CD4-positive, alpha-beta T cell (primary cell): ENCODE measurements at regions of chr17 and their contacts with region 1.

Region 1: DNA sequence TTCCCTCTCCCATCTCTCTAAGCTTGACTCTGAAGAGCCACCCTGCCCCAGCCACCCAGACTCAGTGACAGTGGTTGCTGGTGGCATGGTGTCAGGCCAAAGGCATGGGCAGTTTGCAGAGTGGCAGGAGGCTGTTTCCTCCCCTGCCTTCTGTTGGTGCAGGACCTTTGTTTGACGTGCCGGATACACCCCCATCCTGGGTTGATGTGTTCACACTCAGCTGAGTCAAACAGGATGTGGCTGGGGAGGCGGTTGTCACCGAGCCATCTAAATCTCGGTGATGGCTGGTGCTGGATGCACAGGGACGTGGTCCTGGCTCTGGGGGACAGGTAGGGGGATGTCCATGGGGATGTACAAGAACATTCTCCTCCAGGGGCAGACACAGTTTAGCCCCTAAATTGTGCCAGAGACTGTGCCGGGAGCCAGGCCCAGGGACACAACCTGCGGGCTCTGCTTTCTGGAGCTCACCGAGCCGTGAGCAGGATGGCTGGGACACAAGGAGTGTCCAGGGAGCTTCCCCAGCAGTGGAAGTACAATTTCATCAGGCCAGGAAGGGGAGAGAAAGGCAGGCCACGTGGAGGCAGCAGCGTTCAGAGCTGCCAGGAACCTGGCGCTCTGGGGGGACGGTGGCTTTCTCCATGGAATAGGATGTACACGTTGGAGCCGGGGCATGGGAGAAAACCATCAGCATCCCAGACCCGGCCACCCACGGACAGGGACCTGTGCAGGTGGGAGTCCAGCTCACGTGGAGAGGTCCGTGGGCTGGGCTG is 264.2 kb downstream of the SEC14L1 start:
- DNase-seq: peak; percentile 66 to 94 (median 81)
- ATAC-seq: peak; percentile 80
- H3K4me3 ChIP-seq: peak overlapping the region; percentile 82
- H3K4me3 Mint-ChIP-seq: peak overlapping the region; percentile 91
- H3K27ac ChIP-seq: peak overlapping the region; percentile 86 to 92
- H3K27ac Mint-ChIP-seq: peak overlapping the region; percentile 96
- H3K4me1 ChIP-seq: peaks cover 99% of the 10 kb centered on the region
- H3K4me1 Mint-ChIP-seq: peaks cover 92% of the 10 kb centered on the region
- H3K27me3 ChIP-seq: no peaks in the 10 kb centered on the region
- H3K27me3 Mint-ChIP-seq: no peaks in the 10 kb centered on the region
- CTCF ChIP-seq: no peak

Region 2: DNA sequence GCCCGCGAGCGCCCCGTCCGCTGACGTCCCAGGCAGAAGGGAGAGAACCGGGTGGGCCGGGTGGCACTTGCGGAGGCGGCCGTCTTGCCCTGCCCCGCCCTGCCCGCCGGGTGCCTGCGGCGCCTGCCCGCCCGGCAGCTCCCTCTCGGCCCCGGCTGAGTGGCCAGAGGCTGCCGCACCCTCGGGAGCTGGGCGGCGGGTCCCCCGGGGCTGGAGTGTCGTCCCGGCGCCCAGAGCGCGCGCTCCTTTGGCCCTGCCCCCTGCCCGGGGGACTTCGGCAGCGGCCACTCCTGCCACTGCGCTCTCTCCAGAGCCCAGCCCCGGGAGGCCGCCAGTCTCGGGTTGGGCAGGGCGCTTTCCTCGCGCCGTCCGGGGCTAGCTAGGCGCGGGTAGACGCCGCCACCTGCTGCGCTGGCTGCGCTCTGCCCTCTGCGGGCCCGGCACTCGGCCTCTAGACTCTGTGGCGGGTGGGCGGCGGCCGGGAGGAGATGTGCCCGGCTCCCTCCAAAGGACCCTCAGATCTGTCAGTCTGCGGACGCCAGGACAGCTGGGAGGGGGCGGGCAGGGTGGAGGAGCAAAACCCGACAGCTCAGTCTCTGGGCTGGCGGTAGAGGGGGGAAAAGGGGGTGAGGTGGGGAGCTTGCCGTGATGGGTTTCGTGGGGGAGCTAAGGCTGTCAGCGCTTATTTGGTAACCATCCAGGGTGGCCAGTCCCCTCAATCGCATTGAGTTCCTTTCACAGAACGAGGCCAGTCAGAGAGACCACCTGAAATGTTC is 819.0 kb before region 1 on chr17 and contains the start of gene ST6GALNAC2:
- CTCF ChIA-PET with region 1: no interaction called
- POLR2A ChIA-PET with region 1: no interaction called
- intact Hi-C with region 1: no loop called
- DNase-seq: peak in 12 of 14 experiments; percentile 11 to 75 (median 30)
- ATAC-seq: peak; percentile 75
- H3K4me3 ChIP-seq: peak within 1 kb of the TSS; percentile 56
- H3K4me3 Mint-ChIP-seq: peak within 1 kb of the TSS; percentile 79
- H3K27ac ChIP-seq: no peak within 1 kb of the TSS
- H3K27ac Mint-ChIP-seq: no peak within 1 kb of the TSS
- H3K4me1 ChIP-seq: peaks cover 26% of the 10 kb centered on the region
- H3K4me1 Mint-ChIP-seq: peaks cover 9% of the 10 kb centered on the region
- H3K27me3 ChIP-seq: peaks cover 31 to 49% of the 10 kb centered on the region in 2 experiments
- H3K27me3 Mint-ChIP-seq: peaks cover 59% of the 10 kb centered on the region
- CTCF ChIP-seq: no peak
- total RNA-seq, gene ST6GALNAC2: 0.49 to 1.2 TPM

Region 3: GRCh38 chr17:77325577-77326075 is 79.4 kb before region 1 on chr17:
- CTCF ChIA-PET with region 1: interaction called, 51 read pairs
- POLR2A ChIA-PET with region 1: interaction called, 21 read pairs
- intact Hi-C with region 1: no loop called
- DNase-seq: peak in 4 of 14 experiments; percentile 9 to 68 (median 38)
- ATAC-seq: no peak
- H3K4me3 ChIP-seq: no peak overlapping the region
- H3K4me3 Mint-ChIP-seq: no peak overlapping the region
- H3K27ac ChIP-seq: peak overlapping the region; percentile 35 to 45
- H3K27ac Mint-ChIP-seq: peak overlapping the region; percentile 77
- H3K4me1 ChIP-seq: peaks cover 68% of the 10 kb centered on the region
- H3K4me1 Mint-ChIP-seq: peaks cover 54% of the 10 kb centered on the region
- H3K27me3 ChIP-seq: no peaks in the 10 kb centered on the region
- H3K27me3 Mint-ChIP-seq: no peaks in the 10 kb centered on the region
- CTCF ChIP-seq: no peak

Region 4: DNA sequence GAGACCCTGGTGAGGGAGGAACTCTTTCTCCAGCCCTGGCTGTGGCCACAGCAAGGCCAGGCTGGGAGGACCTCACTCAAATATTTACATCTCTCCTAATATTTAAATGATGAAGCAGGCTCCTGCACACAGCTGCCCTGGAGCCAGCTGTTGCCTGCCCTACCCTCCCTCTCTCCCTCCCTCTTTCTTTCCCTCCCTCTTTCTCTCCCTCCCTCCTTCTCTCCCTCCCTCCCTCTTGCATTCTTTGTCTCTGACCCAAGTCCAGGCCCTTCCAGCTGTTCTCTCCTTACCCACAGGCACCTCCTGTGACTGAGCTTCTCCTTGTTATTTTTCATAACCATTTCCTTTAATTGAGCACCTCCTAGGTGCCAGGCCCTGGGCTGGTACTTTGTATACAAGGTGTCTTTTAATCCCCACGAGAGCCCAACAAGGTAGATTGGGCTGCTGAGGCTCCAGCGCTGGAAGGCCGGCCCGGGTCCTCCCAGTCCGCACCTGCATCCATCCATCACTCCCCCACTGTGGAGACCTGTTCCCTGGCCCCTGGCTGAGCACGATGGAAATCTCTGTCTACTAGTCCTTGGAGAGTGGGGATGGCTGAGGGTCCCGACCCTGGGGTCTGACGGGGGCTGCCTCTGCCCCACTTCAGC is 21.9 kb before region 1 on chr17:
- CTCF ChIA-PET with region 1: interaction called, 12 read pairs
- POLR2A ChIA-PET with region 1: interaction called, 74 read pairs
- intact Hi-C with region 1: no loop called
- DNase-seq: no peak
- ATAC-seq: peak; percentile 9
- H3K4me3 ChIP-seq: peak overlapping the region; percentile 41
- H3K4me3 Mint-ChIP-seq: peak overlapping the region; percentile 50
- H3K27ac ChIP-seq: peak overlapping the region in 1 of 2 donors; percentile 32
- H3K27ac Mint-ChIP-seq: peak overlapping the region; percentile 93
- H3K4me1 ChIP-seq: peaks cover 100% of the 10 kb centered on the region
- H3K4me1 Mint-ChIP-seq: peaks cover 93% of the 10 kb centered on the region
- H3K27me3 ChIP-seq: no peaks in the 10 kb centered on the region
- H3K27me3 Mint-ChIP-seq: no peaks in the 10 kb centered on the region
- CTCF ChIP-seq: no peak

Region 5: GRCh38 chr17:77429919-77430752 is 25.1 kb after region 1 on chr17:
- CTCF ChIA-PET with region 1: interaction called, 74 read pairs
- POLR2A ChIA-PET with region 1: interaction called, 368 read pairs
- intact Hi-C with region 1: loop called in 1 of 2 experiments (anchors 2 kb)
- DNase-seq: peak; percentile 75 to 90 (median 84)
- ATAC-seq: peak; percentile 46
- H3K4me3 ChIP-seq: no peak overlapping the region
- H3K4me3 Mint-ChIP-seq: peak overlapping the region; percentile 62
- H3K27ac ChIP-seq: peak overlapping the region in 1 of 2 donors; percentile 29
- H3K27ac Mint-ChIP-seq: peak overlapping the region; percentile 93
- H3K4me1 ChIP-seq: peaks cover 100% of the 10 kb centered on the region
- H3K4me1 Mint-ChIP-seq: peaks cover 93% of the 10 kb centered on the region
- H3K27me3 ChIP-seq: no peaks in the 10 kb centered on the region
- H3K27me3 Mint-ChIP-seq: no peaks in the 10 kb centered on the region
- CTCF ChIP-seq: peak; percentile 77

Region 6: DNA sequence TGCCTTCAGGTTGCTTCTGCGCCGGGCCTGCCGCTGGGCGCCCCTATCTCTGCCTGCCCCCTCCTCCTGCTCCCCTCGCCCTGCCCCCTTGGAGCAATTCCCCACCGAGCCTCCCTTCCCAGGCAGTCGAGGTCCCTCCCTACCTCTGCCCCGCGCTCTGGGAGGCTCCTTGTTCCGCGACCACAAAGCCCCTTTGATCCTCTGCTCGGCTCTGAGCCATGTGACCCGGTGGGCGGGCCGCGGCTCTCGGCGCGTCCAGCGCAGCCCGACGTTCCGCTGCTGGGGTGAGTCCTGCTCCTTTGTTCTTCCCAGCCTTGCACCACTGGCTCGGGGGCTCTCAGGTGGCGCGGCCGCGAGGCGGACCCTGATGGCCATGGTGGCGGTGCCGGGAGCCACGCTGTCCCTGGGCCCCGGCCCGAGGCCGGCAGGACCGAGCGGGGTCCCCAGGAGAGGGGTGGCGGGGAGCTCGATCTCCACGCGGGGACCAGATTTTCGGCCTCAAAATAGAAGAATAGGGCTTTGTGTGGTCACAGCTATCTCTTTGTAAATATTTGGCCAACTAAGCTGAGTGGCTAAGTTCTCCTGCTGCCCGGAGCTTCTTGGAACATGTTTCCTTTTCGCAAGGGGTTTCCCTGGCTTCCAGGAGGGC is 46.4 kb after region 1 on chr17:
- CTCF ChIA-PET with region 1: interaction called, 12 read pairs
- POLR2A ChIA-PET with region 1: interaction called, 16 read pairs
- intact Hi-C with region 1: no loop called
- DNase-seq: peak; percentile 53 to 85 (median 72)
- ATAC-seq: peak; percentile 47
- H3K4me3 ChIP-seq: peak overlapping the region; percentile 94
- H3K4me3 Mint-ChIP-seq: peak overlapping the region; percentile 98
- H3K27ac ChIP-seq: peak overlapping the region; percentile 67 to 90
- H3K27ac Mint-ChIP-seq: peak overlapping the region; percentile 93
- H3K4me1 ChIP-seq: peaks cover 84% of the 10 kb centered on the region
- H3K4me1 Mint-ChIP-seq: peaks cover 65% of the 10 kb centered on the region
- H3K27me3 ChIP-seq: no peaks in the 10 kb centered on the region
- H3K27me3 Mint-ChIP-seq: no peaks in the 10 kb centered on the region
- CTCF ChIP-seq: no peak

Region 7: GRCh38 chr17:77471984-77472461 is 67.0 kb after region 1 on chr17:
- CTCF ChIA-PET with region 1: interaction called, 12 read pairs
- POLR2A ChIA-PET with region 1: interaction called, 9 read pairs
- intact Hi-C with region 1: loop called in 1 of 2 experiments (anchors 5 kb)
- DNase-seq: no peak
- ATAC-seq: no peak
- H3K4me3 ChIP-seq: peak overlapping the region; percentile 25
- H3K4me3 Mint-ChIP-seq: peak overlapping the region; percentile 79
- H3K27ac ChIP-seq: peak overlapping the region; percentile 40 to 62
- H3K27ac Mint-ChIP-seq: peak overlapping the region; percentile 97
- H3K4me1 ChIP-seq: peaks cover 99% of the 10 kb centered on the region
- H3K4me1 Mint-ChIP-seq: peaks cover 96% of the 10 kb centered on the region
- H3K27me3 ChIP-seq: no peaks in the 10 kb centered on the region
- H3K27me3 Mint-ChIP-seq: no peaks in the 10 kb centered on the region
- CTCF ChIP-seq: no peak